BJ (cell line): ENCODE measurements at regions of chr16 and their contacts with region 1.

Region 1: GRCh38 chr16:68506331-68507053 is 32.6 kb upstream of the ZFP90 start:
- DNase-seq: no peak
- H3K4me3 ChIP-seq: no peak overlapping the region
- H3K27me3 ChIP-seq: no peaks in the 10 kb centered on the region
- CTCF ChIP-seq: no peak

Region 2: GRCh38 chr16:68406451-68407152 is 99.9 kb before region 1 on chr16:
- CTCF ChIA-PET with region 1: interaction called, 212 read pairs
- POLR2A ChIA-PET with region 1: interaction called, 3 read pairs
- DNase-seq: peak; percentile 65
- H3K4me3 ChIP-seq: no peak overlapping the region
- H3K27me3 ChIP-seq: no peaks in the 10 kb centered on the region
- CTCF ChIP-seq: no peak

Region 3: DNA sequence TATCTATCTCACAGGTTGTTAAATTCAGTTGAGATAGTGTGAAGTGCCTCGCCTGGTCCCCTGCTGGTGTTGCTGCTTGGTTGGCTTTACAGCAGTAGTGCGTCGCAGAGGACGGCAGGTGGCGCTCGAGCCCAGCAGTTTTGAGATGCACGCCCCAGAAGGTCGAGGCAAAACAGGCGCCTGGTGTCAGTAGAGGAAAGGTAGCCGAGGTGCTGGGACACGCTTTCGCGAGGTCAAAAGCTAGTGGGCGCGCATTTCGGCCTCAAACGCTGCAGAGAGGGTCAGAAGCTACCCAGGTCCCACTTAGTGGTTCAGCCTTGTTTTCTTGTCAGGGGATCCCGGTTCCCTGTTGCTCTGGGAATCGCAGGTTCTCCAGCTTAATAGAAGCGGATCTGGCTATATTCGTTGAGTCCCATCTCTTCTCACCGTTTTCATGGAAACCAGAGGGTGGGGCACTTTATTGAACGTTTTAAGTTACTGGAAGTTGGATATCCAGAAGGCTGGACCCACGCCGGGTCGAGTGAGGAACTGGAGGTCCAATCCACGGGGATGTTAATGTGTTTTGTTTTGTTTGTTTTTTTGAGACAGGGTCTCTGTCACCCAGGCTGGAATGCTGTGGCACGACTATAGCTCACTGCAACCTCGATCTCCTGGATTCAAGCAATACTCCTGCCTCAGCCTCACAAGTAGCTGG is 22.3 kb after region 1 on chr16:
- CTCF ChIA-PET with region 1: interaction called, 22 read pairs
- POLR2A ChIA-PET with region 1: no interaction called
- DNase-seq: no peak
- H3K4me3 ChIP-seq: peak overlapping the region; percentile 19; the same call in 1 of the 2 replicates
- H3K27me3 ChIP-seq: no peaks in the 10 kb centered on the region
- CTCF ChIP-seq: peak; percentile 97